Activated naive CD4-positive, alpha-beta T cell treated with anti-CD3 and anti-CD28 coated beads for 36 hours (primary cell): ENCODE measurements at regions of chr6 and their contacts with region 1.

Region 1: GRCh38 chr6:87154993-87155841 is at the start of gene ZNF292:
- DNase-seq: peak; percentile 98
- H3K4me3 Mint-ChIP-seq: peak within 1 kb of the TSS; percentile 85
- H3K27ac Mint-ChIP-seq: peak within 1 kb of the TSS; percentile 94
- H3K4me1 Mint-ChIP-seq: peaks cover 46% of the 10 kb centered on the region
- H3K27me3 Mint-ChIP-seq: no peaks in the 10 kb centered on the region
- total RNA-seq, gene ZNF292: 39.5 to 41.2 TPM

Region 2: GRCh38 chr6:85669735-85670194 is 1485.5 kb before region 1 on chr6:
- CTCF ChIA-PET with region 1: no interaction called
- intact Hi-C with region 1: loop called (anchors 1 kb)
- DNase-seq: peak; percentile 55
- H3K4me3 Mint-ChIP-seq: peak overlapping the region; percentile 52
- H3K27ac Mint-ChIP-seq: peak overlapping the region; percentile 87
- H3K4me1 Mint-ChIP-seq: peaks cover 50% of the 10 kb centered on the region
- H3K27me3 Mint-ChIP-seq: no peaks in the 10 kb centered on the region

Region 3: GRCh38 chr6:87197547-87197946 is 42.3 kb after region 1 on chr6:
- CTCF ChIA-PET with region 1: no interaction called
- intact Hi-C with region 1: loop called (anchors 1 kb)
- DNase-seq: peak; percentile 33
- H3K4me3 Mint-ChIP-seq: no peak overlapping the region
- H3K27ac Mint-ChIP-seq: peak overlapping the region; percentile 68
- H3K4me1 Mint-ChIP-seq: peaks cover 78% of the 10 kb centered on the region
- H3K27me3 Mint-ChIP-seq: no peaks in the 10 kb centered on the region

Region 4: GRCh38 chr6:87251225-87251624 is 96.0 kb after region 1 on chr6:
- CTCF ChIA-PET with region 1: no interaction called
- intact Hi-C with region 1: loop called (anchors 5 kb)
- DNase-seq: no peak
- H3K4me3 Mint-ChIP-seq: peak overlapping the region; percentile 9
- H3K27ac Mint-ChIP-seq: peak overlapping the region; percentile 76
- H3K4me1 Mint-ChIP-seq: peaks cover 24% of the 10 kb centered on the region
- H3K27me3 Mint-ChIP-seq: no peaks in the 10 kb centered on the region

Region 5: DNA sequence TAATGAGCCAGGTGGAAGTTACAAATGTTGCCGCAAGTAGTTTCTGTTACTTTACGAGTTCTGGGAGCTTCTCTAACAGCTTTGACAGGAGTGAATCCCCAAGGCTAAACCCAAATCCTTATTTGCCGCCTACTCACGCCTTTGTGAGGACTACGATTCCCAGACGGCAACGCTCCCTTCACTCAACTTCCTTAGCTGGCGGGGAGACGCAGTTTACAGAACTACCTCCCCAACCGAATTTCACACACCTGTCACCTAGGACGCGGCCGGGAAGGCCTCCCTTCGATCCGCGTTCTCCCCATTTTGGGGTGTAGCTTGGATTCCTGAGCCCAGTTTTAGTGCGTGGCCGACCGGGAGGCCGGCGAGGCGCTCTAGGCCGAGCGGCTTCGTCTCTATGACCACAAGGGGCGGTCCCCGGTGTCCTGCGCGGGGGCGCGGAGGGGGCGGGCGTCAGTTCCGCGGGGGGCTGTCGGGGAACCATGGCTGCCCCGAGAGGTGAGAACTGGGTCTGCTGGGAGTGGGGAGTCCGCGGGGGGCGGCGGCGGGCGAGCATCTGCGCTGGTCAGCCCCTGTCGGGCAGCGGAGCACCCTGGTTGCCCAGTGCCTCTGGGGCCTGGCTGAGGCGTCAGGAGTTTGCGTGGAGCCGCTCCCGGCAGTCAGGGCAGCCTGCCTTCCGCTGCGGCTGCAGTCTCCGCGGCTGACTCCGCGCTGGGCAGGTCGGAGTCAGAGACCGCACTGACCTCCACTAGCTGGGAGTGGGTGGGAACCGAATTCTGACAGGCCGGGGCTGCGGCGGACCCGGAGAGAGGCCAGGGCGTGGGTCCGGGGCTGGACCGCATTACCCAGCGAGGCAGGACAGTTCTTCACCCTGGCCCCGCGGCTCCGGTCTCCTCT is 317.6 kb after region 1 on chr6 and contains the start of gene SLC35A1:
- CTCF ChIA-PET with region 1: interaction called, 3 read pairs
- intact Hi-C with region 1: loop called (anchors 1 kb)
- DNase-seq: peak; percentile 80
- H3K4me3 Mint-ChIP-seq: peak within 1 kb of the TSS; percentile 95
- H3K27ac Mint-ChIP-seq: peak within 1 kb of the TSS; percentile 92
- H3K4me1 Mint-ChIP-seq: peaks cover 15% of the 10 kb centered on the region
- H3K27me3 Mint-ChIP-seq: peaks cover 4% of the 10 kb centered on the region
- total RNA-seq, gene SLC35A1: 6.7 to 6.8 TPM

Region 6: DNA sequence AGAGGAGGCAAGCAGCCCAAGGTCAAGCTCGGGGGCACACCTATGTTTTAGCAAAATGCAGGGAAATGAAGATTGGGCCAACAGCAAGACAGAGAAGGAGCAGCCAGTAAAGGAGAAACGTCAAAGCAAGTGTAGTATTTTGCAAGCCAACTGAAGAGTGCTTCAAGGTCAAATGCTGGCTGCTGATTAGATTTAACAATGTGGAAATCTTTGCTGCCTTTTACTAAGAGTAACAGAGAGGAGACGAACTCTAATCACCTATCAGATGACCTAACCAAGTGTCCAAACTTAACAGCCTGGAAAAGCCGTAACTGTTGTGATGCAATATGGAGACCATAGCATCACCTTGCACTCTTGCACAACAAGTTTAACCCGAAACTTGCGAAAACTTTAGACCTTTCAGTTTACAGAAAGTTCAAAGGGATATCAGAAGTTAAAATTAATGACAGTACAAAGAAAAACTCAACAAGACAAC is 516.4 kb after region 1 on chr6:
- CTCF ChIA-PET with region 1: no interaction called
- intact Hi-C with region 1: no loop called
- DNase-seq: no peak
- H3K4me3 Mint-ChIP-seq: no peak overlapping the region
- H3K27ac Mint-ChIP-seq: no peak overlapping the region
- H3K4me1 Mint-ChIP-seq: peaks cover 9% of the 10 kb centered on the region
- H3K27me3 Mint-ChIP-seq: no peaks in the 10 kb centered on the region

Region 7: DNA sequence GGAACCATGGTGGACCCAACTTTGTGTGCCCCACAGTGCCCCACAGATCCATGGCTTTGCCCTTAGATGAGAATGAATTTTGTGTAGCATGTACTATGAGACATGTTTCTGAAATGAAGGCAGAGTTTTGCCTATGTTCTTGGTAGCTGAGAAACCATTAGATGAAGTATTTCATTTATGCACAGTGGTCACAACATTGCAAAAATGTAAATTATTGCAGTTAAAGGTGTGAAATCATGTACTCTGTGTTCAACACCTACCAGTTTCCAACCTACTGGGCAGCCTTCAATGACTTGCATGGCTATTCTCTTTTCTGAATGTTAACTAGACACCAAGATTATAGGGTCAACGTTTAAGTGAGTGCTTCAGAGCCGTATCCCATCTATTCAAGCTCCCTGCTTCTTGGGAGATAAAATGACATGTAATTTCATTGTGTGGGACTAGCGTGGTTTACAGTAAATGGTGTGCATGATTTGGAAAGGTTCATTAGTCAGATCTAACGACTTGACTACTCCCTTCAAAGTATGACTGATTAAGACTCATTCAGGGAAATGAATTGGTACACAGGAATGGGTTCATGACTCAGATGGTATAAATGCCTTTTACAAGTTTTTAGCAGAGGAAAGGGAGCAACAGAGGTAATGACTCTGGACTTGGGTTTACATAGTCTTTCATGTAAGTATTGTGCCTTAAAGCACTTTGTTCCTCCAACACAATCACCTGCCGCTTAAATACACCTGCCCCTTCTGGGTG is 653.0 kb after region 1 on chr6:
- CTCF ChIA-PET with region 1: no interaction called
- intact Hi-C with region 1: loop called (anchors 5 kb)
- DNase-seq: peak; percentile 16
- H3K4me3 Mint-ChIP-seq: no peak overlapping the region
- H3K27ac Mint-ChIP-seq: peak overlapping the region; percentile 50
- H3K4me1 Mint-ChIP-seq: peaks cover 16% of the 10 kb centered on the region
- H3K27me3 Mint-ChIP-seq: peaks cover 20% of the 10 kb centered on the region